ENCODE measurements at regions of chr9 and their contacts with region 1.

Region 1: DNA sequence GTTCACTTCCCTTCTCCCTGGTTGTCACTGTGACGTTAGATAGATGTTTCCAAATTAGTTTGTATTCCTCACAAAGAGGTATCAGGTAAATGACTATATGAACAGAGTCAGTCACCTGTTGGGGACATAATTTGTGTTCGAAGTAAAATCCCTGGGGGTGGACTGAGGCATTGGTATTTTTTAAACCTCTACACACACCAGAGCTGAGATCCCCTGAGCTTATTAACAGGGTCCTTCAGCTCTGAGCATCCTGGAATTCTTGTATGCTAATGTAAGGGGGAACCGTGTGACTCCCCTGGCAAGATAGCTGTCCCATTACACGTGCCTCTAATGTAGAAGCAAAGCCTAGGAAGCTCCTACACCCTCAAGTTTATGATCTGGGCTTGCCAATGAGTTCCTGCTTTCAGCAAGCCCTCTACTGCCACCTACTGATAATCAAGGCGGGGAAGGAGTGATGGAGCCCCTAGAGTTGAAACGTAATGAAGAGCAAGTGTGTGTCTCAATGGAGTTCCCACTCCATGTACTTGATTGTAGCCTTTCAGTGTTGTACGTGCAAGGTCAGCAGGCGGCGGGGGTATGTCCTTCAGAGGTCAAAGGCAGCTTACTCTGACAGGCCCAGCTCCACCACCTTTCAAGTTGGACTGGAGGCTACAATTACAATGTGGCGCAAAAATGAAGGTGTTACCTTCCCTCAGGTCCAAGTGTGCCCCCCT is 14.4 kb downstream of the PRKACG start:
- DNase-seq: peak; percentile 93
- H3K4me3 Mint-ChIP-seq: no peak overlapping the region
- H3K27ac Mint-ChIP-seq: peak overlapping the region; percentile 26
- H3K4me1 Mint-ChIP-seq: peaks cover 34% of the 10 kb centered on the region
- H3K27me3 Mint-ChIP-seq: peaks cover 2% of the 10 kb centered on the region

Region 2: GRCh38 chr9:68584189-68585033 is 415.1 kb before region 1 on chr9:
- intact Hi-C with region 1: loop called (anchors 1 kb)
- DNase-seq: peak; percentile 94
- H3K4me3 Mint-ChIP-seq: no peak overlapping the region
- H3K27ac Mint-ChIP-seq: no peak overlapping the region
- H3K4me1 Mint-ChIP-seq: peaks cover 13% of the 10 kb centered on the region
- H3K27me3 Mint-ChIP-seq: peaks cover 2% of the 10 kb centered on the region

Region 3: GRCh38 chr9:68844631-68845612 is 154.6 kb before region 1 on chr9:
- intact Hi-C with region 1: loop called (anchors 10 kb)
- DNase-seq: peak; percentile 62
- H3K4me3 Mint-ChIP-seq: no peak overlapping the region
- H3K27ac Mint-ChIP-seq: peak overlapping the region; percentile 42
- H3K4me1 Mint-ChIP-seq: peaks cover 11% of the 10 kb centered on the region
- H3K27me3 Mint-ChIP-seq: no peaks in the 10 kb centered on the region

Region 4: GRCh38 chr9:68925175-68925574 is 74.4 kb before region 1 on chr9:
- intact Hi-C with region 1: no loop called
- DNase-seq: no peak
- H3K4me3 Mint-ChIP-seq: no peak overlapping the region
- H3K27ac Mint-ChIP-seq: no peak overlapping the region
- H3K4me1 Mint-ChIP-seq: peaks cover 3% of the 10 kb centered on the region
- H3K27me3 Mint-ChIP-seq: peaks cover 20% of the 10 kb centered on the region

Region 5: DNA sequence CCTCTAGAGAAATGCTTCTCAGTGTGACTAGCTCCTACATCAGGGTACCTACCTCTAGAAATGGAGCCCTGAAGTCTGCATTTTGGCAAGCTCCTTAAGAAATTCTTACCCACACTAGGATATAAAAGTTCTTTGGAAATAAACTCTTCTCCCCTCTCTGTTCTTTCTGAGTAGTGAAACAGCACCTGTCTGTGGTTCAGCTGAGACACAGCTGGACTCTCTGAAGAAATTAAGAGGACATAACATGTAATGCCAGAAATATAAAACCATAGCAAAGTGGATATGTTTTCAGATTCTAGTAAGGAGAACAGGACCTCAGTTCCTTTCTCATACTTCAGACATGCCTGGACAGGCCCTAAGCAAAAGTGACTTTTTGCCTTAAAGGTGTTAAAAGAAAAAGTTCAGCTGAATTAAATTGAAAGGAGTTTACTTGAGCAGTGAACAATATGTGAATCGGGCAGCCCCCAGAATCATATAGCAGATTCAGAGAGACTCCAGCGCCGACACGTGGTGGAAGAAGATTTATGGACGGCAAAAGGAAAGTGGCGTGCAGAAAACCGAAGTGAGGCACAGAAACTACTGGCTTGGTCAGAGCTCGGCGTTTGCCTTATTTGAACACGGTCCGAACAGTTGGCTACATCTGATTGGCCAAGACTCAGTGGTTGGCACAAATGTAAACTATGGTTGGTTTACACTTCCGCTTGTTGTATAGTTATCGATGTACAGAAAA is 50.1 kb before region 1 on chr9:
- intact Hi-C with region 1: loop called (anchors 1 kb)
- DNase-seq: peak; percentile 79
- H3K4me3 Mint-ChIP-seq: peak overlapping the region; percentile 28
- H3K27ac Mint-ChIP-seq: peak overlapping the region; percentile 81
- H3K4me1 Mint-ChIP-seq: peaks cover 59% of the 10 kb centered on the region
- H3K27me3 Mint-ChIP-seq: no peaks in the 10 kb centered on the region

Region 6: DNA sequence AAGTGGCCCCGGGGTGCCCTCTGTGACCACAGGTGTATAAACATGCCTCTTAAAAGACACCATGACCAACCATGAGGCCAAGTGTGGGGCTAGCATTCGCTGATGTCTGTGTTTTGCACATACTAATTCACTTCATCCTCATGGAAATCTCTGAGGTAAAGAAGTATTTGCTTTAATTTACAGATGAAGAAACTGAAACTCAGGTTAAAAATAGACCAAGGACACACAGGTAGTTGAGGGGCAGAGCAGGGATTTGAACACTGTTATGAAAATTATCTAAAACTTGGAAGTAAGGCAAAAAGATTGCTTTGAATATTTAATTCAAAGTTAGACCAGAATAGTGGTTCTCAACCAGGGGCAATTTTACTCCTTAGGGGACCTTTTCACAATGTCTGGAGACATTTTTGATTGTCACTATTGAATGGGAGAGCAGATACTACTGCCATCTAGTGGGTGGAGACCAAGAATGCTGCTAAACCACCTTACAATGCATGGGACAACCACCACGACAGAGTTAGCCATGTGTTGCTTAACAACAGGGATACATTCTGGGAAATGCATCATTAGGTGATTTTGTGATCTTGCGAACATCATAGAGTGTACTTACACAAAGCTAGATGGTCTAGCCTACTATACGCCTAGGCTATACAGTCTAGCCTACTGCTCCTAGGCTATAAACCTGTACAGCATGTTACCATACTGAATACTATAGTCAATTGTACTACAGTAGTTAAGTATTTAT is 28.0 kb after region 1 on chr9:
- intact Hi-C with region 1: loop called (anchors 2 kb)
- DNase-seq: peak; percentile 84
- H3K4me3 Mint-ChIP-seq: no peak overlapping the region
- H3K27ac Mint-ChIP-seq: no peak overlapping the region
- H3K4me1 Mint-ChIP-seq: peaks cover 44% of the 10 kb centered on the region
- H3K27me3 Mint-ChIP-seq: peaks cover 2% of the 10 kb centered on the region

Measured in activated CD4-positive, alpha-beta T cell treated with anti-CD3 and anti-CD28 coated beads, Interleukin-2, amount 10 ng/mL, durations not matched to agents 24 days and 14 days (primary cell).